BJ (cell line): ENCODE measurements at regions of chr10 and their contacts with region 1.

Region 1: GRCh38 chr10:104308439-104308903 is 29.8 kb downstream of the ITPRIP start:
- DNase-seq: no peak
- H3K4me3 ChIP-seq: no peak overlapping the region
- H3K27me3 ChIP-seq: no peaks in the 10 kb centered on the region
- CTCF ChIP-seq: no peak

Region 2: GRCh38 chr10:104254493-104255310 is 53.8 kb before region 1 on chr10 and contains the start of gene GSTO1:
- CTCF ChIA-PET with region 1: no interaction called
- POLR2A ChIA-PET with region 1: no interaction called
- DNase-seq: no peak
- H3K4me3 ChIP-seq: peak within 1 kb of the TSS; percentile 85
- H3K27me3 ChIP-seq: peaks cover 1% of the 10 kb centered on the region; the same call in 1 of the 2 replicates
- CTCF ChIP-seq: peak; percentile 24; the same call in 1 of the 2 replicates
- polyA plus RNA-seq, gene GSTO1: 79.3 and 149 TPM in 2 replicates

Region 3: GRCh38 chr10:104274762-104275721 is 33.4 kb before region 1 on chr10:
- CTCF ChIA-PET with region 1: interaction called, 14 read pairs
- POLR2A ChIA-PET with region 1: no interaction called
- DNase-seq: no peak
- H3K4me3 ChIP-seq: peak overlapping the region; percentile 29
- H3K27me3 ChIP-seq: no peaks in the 10 kb centered on the region
- CTCF ChIP-seq: peak; percentile 97

Region 4: GRCh38 chr10:104291439-104291951 is 17.0 kb before region 1 on chr10:
- CTCF ChIA-PET with region 1: interaction called, 92 read pairs
- POLR2A ChIA-PET with region 1: no interaction called
- DNase-seq: no peak
- H3K4me3 ChIP-seq: no peak overlapping the region
- H3K27me3 ChIP-seq: no peaks in the 10 kb centered on the region
- CTCF ChIP-seq: peak; percentile 100

Region 5: DNA sequence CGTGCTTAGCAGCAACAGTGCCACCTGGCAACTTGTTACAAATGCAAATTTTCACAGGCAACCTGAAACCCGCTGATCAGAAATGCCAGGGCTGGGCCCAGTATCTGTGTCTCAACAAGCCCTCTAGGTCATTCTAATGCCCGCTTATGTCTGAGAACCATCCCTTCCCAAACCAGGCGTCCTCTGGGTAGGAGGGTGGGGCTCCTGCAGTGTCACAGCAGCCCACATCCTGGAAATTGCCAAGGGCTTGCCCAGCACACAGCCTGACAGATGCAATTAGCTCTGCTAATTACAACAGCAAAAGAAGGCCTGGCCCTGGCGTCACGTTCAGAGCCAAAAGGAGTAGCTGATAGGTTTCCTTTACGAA is 13.9 kb after region 1 on chr10:
- CTCF ChIA-PET with region 1: interaction called, 35 read pairs
- POLR2A ChIA-PET with region 1: no interaction called
- DNase-seq: no peak
- H3K4me3 ChIP-seq: no peak overlapping the region
- H3K27me3 ChIP-seq: no peaks in the 10 kb centered on the region
- CTCF ChIP-seq: no peak

Region 6: DNA sequence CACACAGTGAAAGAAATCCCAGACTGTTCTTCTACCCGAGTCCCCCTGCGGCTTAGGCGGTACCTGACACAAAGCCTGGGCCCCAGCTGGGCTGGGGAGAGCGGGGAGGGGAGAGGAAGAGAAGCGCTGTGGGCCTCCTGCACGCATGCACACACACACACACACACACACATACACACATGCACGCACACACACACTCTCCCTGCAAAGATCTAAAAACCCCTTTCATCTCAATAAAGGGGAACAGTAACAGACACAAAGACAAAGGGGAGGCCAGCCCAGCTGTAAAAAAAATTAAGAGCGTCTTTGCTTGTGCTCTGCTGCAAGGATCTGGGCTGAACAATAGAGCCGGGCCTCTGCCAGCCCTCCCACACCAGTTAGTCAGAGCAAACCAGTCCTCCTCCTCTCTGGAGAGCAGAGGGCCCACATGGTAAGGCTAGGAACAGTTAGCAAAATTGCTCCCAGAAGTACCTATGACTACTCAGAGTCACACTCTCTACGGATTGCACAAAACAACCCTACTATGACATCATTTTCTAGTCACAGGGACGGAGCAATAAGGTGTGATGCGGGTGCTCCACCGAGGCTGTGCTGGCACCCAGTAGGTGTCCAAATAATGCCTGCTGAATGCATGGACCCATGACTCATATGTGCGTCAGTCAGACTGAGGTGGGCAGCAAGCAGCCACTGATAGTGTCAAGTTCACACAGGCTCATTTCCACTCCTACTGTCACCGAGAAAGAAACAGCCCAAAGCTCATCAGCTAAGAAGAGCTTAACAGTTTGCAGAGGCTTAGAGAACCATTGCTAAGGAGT is 20.6 kb after region 1 on chr10:
- CTCF ChIA-PET with region 1: interaction called, 11 read pairs
- POLR2A ChIA-PET with region 1: interaction called, 14 read pairs
- DNase-seq: peak; percentile 77
- H3K4me3 ChIP-seq: peak overlapping the region; percentile 15; the same call in 1 of the 2 replicates
- H3K27me3 ChIP-seq: no peaks in the 10 kb centered on the region
- CTCF ChIP-seq: no peak

Region 7: GRCh38 chr10:104337974-104338735 is 29.7 kb after region 1 on chr10 and contains the start of gene ITPRIP:
- CTCF ChIA-PET with region 1: interaction called, 29 read pairs
- POLR2A ChIA-PET with region 1: interaction called, 10 read pairs
- DNase-seq: peak; percentile 56
- H3K4me3 ChIP-seq: peak within 1 kb of the TSS; percentile 87
- H3K27me3 ChIP-seq: no peaks in the 10 kb centered on the region
- CTCF ChIP-seq: peak; percentile 30
- polyA plus RNA-seq, gene ITPRIP: 24.4 and 33.6 TPM in 2 replicates

Region 8: GRCh38 chr10:104353325-104354048 is 45.0 kb after region 1 on chr10 and contains the start of gene CFAP58:
- CTCF ChIA-PET with region 1: interaction called, 101 read pairs
- POLR2A ChIA-PET with region 1: no interaction called
- DNase-seq: no peak
- H3K4me3 ChIP-seq: peak within 1 kb of the TSS; percentile 47
- H3K27me3 ChIP-seq: no peaks in the 10 kb centered on the region
- CTCF ChIP-seq: peak; percentile 82
- polyA plus RNA-seq, gene CFAP58: 0.23 and 0.37 TPM in 2 replicates

Region 9: DNA sequence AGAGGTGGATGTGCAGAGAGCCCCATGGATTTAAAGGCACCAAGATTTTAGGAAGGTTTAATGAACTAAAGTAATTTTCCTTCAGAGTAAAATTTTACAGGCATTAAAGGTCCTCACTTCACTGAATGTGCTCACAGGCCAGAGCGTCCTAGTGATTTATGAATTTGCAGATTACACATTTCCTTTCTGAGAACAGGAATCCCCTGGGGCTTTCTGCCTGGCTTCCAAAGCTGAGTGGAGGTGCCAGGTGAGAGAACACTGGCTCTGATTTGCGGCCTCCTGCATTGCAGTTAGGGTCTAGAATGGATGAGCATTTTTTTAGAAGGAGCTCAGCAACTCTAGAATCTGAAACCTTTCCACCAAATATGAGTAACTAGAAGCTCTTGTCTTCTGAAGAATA is 527.0 kb after region 1 on chr10:
- CTCF ChIA-PET with region 1: no interaction called
- POLR2A ChIA-PET with region 1: no interaction called
- DNase-seq: no peak
- H3K4me3 ChIP-seq: no peak overlapping the region
- H3K27me3 ChIP-seq: no peaks in the 10 kb centered on the region
- CTCF ChIP-seq: no peak